ENCODE measurements at regions of chr3 and their contacts with region 1.

Region 1: DNA sequence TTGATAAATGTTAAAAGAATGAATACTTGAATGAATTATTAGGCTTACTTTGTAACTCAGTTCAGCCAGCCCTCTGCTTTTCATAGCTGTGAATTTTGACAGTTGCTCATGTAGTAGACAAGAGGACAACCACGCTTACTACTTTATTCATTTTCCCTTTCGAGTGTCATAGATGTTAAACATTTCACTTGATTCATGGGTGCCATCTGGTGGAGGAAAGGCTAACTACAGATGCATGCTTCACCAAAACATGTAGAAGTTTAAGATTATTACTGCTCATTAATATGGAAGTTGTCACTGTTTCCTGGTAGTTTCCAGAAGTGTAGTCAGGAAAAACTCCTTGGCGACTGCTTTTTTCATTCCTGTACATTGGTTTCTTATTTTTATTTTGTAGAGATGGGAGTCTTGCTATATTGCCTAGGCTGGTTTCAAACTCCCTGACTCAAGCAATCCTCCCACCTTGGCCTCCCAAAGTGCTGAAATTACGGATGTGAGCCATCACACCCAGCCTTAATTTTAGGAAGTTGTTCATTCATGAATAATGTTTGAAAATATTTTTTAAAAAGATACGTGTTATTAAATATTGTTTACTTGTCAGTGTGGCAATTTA is 163.2 kb downstream of the B3GALNT1 start:
- DNase-seq: peak; percentile 7 to 79 (median 60)
- ATAC-seq: peak; percentile 57
- H3K4me3 ChIP-seq: no peak overlapping the region
- H3K4me3 Mint-ChIP-seq: no peak overlapping the region
- H3K27ac ChIP-seq: no peak overlapping the region
- H3K27ac Mint-ChIP-seq: no peak overlapping the region
- H3K4me1 ChIP-seq: no peaks in the 10 kb centered on the region
- H3K4me1 Mint-ChIP-seq: peaks cover 4% of the 10 kb centered on the region
- H3K27me3 ChIP-seq: no peaks in the 10 kb centered on the region
- H3K27me3 Mint-ChIP-seq: no peaks in the 10 kb centered on the region
- CTCF ChIP-seq: peak; percentile 85

Region 2: GRCh38 chr3:160686955-160687535 is 254.9 kb before region 1 on chr3:
- CTCF ChIA-PET with region 1: interaction called, 3 read pairs
- POLR2A ChIA-PET with region 1: no interaction called
- intact Hi-C with region 1: loop called (anchors 1 kb)
- DNase-seq: peak in 2 of 14 experiments; percentile 27 to 35
- ATAC-seq: no peak
- H3K4me3 ChIP-seq: no peak overlapping the region
- H3K4me3 Mint-ChIP-seq: no peak overlapping the region
- H3K27ac ChIP-seq: no peak overlapping the region
- H3K27ac Mint-ChIP-seq: no peak overlapping the region
- H3K4me1 ChIP-seq: no peaks in the 10 kb centered on the region
- H3K4me1 Mint-ChIP-seq: no peaks in the 10 kb centered on the region
- H3K27me3 ChIP-seq: no peaks in the 10 kb centered on the region
- H3K27me3 Mint-ChIP-seq: peaks cover 5% of the 10 kb centered on the region
- CTCF ChIP-seq: peak; percentile 30

Region 3: DNA sequence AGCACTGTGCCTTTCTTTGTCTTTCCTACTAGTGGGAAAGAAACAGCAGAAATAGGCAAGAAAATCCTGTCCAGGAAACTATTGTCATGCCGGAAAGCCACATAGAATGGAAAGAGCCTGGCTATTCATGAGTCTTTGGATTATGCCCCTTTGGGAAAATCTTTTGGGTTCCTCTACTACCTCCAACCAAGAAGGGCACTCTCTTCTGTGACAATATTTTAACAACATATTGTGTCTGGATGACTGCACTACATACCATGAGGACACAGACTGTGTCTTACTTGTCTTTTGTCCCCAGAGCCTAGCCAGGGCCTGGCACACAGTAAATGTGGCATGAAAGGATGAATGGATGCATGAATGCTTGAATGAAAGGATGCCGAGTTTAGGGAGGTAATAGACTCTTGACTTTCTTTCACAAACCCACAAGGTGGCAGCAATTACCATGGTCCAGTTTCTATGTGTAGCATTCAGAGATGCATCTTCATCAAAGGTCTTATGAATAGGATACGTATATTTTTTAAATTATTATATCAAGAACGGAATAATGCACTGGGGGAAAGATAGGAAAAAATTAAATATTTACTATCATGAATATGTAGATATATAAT is 234.7 kb before region 1 on chr3:
- CTCF ChIA-PET with region 1: interaction called, 8 read pairs
- POLR2A ChIA-PET with region 1: interaction called, 4 read pairs
- intact Hi-C with region 1: loop called (anchors 1 kb)
- DNase-seq: peak in 10 of 14 experiments; percentile 2 to 73 (median 21)
- ATAC-seq: no peak
- H3K4me3 ChIP-seq: no peak overlapping the region
- H3K4me3 Mint-ChIP-seq: no peak overlapping the region
- H3K27ac ChIP-seq: no peak overlapping the region
- H3K27ac Mint-ChIP-seq: no peak overlapping the region
- H3K4me1 ChIP-seq: no peaks in the 10 kb centered on the region
- H3K4me1 Mint-ChIP-seq: no peaks in the 10 kb centered on the region
- H3K27me3 ChIP-seq: peaks cover 11 to 27% of the 10 kb centered on the region in 2 experiments
- H3K27me3 Mint-ChIP-seq: peaks cover 46% of the 10 kb centered on the region
- CTCF ChIP-seq: peak; percentile 78

Region 4: GRCh38 chr3:160720123-160720746 is 221.8 kb before region 1 on chr3:
- CTCF ChIA-PET with region 1: no interaction called
- POLR2A ChIA-PET with region 1: no interaction called
- intact Hi-C with region 1: no loop called
- DNase-seq: no peak
- ATAC-seq: no peak
- H3K4me3 ChIP-seq: no peak overlapping the region
- H3K4me3 Mint-ChIP-seq: no peak overlapping the region
- H3K27ac ChIP-seq: no peak overlapping the region
- H3K27ac Mint-ChIP-seq: no peak overlapping the region
- H3K4me1 ChIP-seq: no peaks in the 10 kb centered on the region
- H3K4me1 Mint-ChIP-seq: no peaks in the 10 kb centered on the region
- H3K27me3 ChIP-seq: no peaks in the 10 kb centered on the region
- H3K27me3 Mint-ChIP-seq: peaks cover 20% of the 10 kb centered on the region
- CTCF ChIP-seq: no peak

Measured in CD4-positive, alpha-beta T cell (primary cell).